B cell (primary cell): ENCODE measurements at regions of chr3 and their contacts with region 1.

Region 1: GRCh38 chr3:102229062-102229655 is 205.7 kb upstream of the ZPLD1 start:
- DNase-seq: peak; percentile 87
- ATAC-seq: peak; percentile 53
- H3K4me3 ChIP-seq: no peak overlapping the region
- H3K4me3 Mint-ChIP-seq: no peak overlapping the region
- H3K27ac ChIP-seq: no peak overlapping the region
- H3K27ac Mint-ChIP-seq: no peak overlapping the region
- H3K4me1 ChIP-seq: peaks cover 22 to 28% of the 10 kb centered on the region in 2 donors
- H3K4me1 Mint-ChIP-seq: peaks cover 36% of the 10 kb centered on the region
- H3K27me3 ChIP-seq: no peaks in the 10 kb centered on the region
- H3K27me3 Mint-ChIP-seq: peaks cover 3% of the 10 kb centered on the region
- CTCF ChIP-seq: peak; percentile 90

Region 2: DNA sequence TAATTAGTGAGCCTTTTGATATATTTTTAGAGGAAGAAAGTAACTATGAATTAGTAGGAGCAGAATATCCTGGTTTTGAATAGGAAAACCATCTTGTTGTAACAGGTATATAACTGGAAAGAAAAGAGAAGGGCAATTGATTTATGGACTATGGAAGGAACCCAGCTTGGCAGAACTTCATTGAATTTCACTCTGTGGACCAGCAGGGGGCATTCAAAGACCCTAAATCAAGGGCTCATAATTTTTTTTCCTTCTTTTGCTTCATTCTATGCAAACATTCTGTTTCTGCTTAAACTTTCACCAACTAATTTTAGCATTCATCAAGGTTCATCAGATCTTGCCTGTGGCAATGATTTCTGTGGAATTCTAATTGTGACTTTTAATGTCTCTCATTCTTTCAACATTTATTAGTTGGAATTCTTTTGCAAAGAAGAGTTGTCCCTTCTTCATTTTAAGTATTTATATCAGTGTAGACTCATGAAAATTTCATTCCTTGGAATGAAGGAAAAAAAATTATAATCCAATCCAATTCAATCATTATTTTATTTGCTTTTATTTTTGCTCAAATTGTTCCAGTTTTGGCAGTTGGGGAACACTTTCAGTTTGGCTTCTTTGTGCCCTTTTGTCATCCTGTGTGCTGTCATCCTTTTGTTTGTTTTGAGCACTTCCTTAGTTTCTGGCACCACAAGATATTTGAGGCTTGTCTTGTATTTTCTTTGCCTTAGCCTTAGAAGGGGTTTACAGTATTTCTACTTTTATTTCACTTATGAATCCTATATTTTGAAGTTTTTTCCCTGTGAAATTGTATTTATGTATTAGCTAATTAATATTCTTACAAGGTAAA is 419.8 kb before region 1 on chr3:
- CTCF ChIA-PET with region 1: interaction called, 1,306 read pairs
- POLR2A ChIA-PET with region 1: interaction called, 5 read pairs
- intact Hi-C with region 1: loop called (anchors 1 kb)
- DNase-seq: peak; percentile 71
- ATAC-seq: peak; percentile 64
- H3K4me3 ChIP-seq: no peak overlapping the region
- H3K4me3 Mint-ChIP-seq: no peak overlapping the region
- H3K27ac ChIP-seq: no peak overlapping the region
- H3K27ac Mint-ChIP-seq: no peak overlapping the region
- H3K4me1 ChIP-seq: peaks cover 5 to 13% of the 10 kb centered on the region in 2 donors
- H3K4me1 Mint-ChIP-seq: peaks cover 20% of the 10 kb centered on the region
- H3K27me3 ChIP-seq: no peaks in the 10 kb centered on the region
- H3K27me3 Mint-ChIP-seq: no peaks in the 10 kb centered on the region
- CTCF ChIP-seq: peak; percentile 88

Region 3: DNA sequence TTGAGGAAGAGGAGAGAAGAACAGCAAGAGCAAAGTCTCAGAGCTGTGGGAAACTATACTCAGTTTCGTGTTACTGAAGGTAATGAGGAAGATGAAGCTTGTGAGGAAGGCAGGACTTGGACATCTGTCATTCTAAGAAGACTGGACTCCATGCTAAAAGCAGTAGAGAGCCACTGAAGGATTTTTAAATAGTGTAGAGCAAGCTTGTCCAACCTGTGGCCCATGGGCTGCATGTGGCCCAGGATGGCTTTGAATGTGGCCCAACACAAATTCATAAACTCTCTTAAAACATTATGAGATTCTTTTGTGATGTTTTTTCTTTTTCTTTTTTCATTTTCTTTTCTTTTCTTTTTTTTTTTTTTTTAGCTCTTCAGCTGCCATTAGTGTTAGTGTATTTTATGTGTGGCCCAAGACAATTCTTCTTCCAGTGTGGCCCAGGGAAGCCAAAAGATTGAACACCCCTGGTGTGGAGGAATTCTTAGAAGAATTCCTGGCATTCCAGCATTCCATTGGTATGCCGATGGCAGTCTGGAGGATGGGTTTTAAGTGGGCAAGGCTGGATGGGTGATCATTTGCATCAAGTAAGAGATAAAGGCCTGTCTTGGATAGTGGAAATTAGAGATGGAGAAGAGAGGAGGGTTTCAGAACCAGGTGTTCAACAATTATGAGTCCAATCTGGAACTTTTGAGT is 386.8 kb before region 1 on chr3:
- CTCF ChIA-PET with region 1: interaction called, 57 read pairs
- POLR2A ChIA-PET with region 1: no interaction called
- intact Hi-C with region 1: no loop called
- DNase-seq: no peak
- ATAC-seq: no peak
- H3K4me3 ChIP-seq: no peak overlapping the region
- H3K4me3 Mint-ChIP-seq: peak overlapping the region; percentile 8
- H3K27ac ChIP-seq: no peak overlapping the region
- H3K27ac Mint-ChIP-seq: peak overlapping the region; percentile 70
- H3K4me1 ChIP-seq: peaks cover 24 to 35% of the 10 kb centered on the region in 2 donors
- H3K4me1 Mint-ChIP-seq: peaks cover 54% of the 10 kb centered on the region
- H3K27me3 ChIP-seq: no peaks in the 10 kb centered on the region
- H3K27me3 Mint-ChIP-seq: no peaks in the 10 kb centered on the region
- CTCF ChIP-seq: no peak

Region 4: DNA sequence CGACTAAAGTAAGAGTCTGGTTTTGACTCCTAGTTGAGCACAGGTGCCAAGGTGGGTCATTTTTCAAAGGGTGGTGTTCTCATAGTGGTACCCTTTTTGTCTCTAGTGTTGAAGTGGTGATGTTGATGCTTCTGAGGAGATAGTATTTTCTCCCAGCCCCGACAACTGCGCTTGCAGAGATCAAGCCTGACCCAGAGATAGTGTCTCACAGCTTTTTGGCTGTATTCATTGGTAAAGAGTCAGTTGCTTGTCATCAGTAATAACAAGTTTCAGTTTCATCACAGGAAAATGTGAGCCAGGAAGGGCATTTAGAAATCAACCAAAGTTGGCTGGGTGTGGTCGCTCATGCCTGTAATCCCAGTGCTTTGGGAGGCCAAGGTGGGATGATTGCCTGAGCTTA is 240.6 kb before region 1 on chr3:
- CTCF ChIA-PET with region 1: interaction called, 10 read pairs
- POLR2A ChIA-PET with region 1: no interaction called
- intact Hi-C with region 1: no loop called
- DNase-seq: no peak
- ATAC-seq: peak; percentile 14
- H3K4me3 ChIP-seq: no peak overlapping the region
- H3K4me3 Mint-ChIP-seq: peak overlapping the region; percentile 12
- H3K27ac ChIP-seq: no peak overlapping the region
- H3K27ac Mint-ChIP-seq: peak overlapping the region; percentile 12
- H3K4me1 ChIP-seq: peaks cover 16 to 18% of the 10 kb centered on the region in 2 donors
- H3K4me1 Mint-ChIP-seq: peaks cover 23% of the 10 kb centered on the region
- H3K27me3 ChIP-seq: no peaks in the 10 kb centered on the region
- H3K27me3 Mint-ChIP-seq: no peaks in the 10 kb centered on the region
- CTCF ChIP-seq: no peak

Region 5: DNA sequence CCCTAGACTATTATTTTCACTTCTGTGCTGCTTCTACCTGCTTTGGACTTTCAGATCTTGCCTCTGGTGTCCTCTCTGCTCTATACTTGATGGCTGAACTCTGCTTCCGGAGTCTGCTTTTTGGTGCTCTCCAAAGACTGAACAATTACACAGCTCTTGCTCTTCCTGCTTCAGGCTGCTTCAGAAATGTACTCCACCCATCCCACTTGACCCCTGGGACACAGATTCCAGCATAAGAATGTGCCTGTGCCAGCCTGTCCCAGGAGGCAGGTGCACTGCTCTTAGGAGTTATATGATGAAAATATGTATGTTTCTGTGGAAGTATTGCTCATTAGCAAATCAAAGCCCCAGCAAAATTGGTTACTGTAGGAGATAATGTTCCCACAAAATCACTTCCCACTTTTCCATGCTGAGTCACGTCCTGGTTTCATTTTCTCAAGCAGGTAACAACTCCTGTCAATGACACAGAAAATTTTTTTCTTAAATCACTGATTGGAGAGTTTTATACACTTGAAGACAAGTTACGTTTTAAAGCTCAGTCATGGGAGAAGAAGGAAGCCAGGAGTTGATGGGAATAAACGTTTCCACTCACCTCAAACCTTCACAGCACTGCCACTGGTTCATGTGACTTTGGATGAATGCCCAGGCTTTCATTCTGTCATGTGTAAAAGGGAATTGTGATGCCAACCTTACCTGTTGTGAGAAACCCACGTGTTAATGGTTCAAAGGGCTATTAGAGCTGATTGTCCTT is 33.8 kb before region 1 on chr3:
- CTCF ChIA-PET with region 1: interaction called, 16 read pairs
- POLR2A ChIA-PET with region 1: no interaction called
- intact Hi-C with region 1: no loop called
- DNase-seq: no peak
- ATAC-seq: no peak
- H3K4me3 ChIP-seq: no peak overlapping the region
- H3K4me3 Mint-ChIP-seq: no peak overlapping the region
- H3K27ac ChIP-seq: no peak overlapping the region
- H3K27ac Mint-ChIP-seq: no peak overlapping the region
- H3K4me1 ChIP-seq: no peaks in the 10 kb centered on the region
- H3K4me1 Mint-ChIP-seq: no peaks in the 10 kb centered on the region
- H3K27me3 ChIP-seq: no peaks in the 10 kb centered on the region
- H3K27me3 Mint-ChIP-seq: no peaks in the 10 kb centered on the region
- CTCF ChIP-seq: no peak

Region 6: DNA sequence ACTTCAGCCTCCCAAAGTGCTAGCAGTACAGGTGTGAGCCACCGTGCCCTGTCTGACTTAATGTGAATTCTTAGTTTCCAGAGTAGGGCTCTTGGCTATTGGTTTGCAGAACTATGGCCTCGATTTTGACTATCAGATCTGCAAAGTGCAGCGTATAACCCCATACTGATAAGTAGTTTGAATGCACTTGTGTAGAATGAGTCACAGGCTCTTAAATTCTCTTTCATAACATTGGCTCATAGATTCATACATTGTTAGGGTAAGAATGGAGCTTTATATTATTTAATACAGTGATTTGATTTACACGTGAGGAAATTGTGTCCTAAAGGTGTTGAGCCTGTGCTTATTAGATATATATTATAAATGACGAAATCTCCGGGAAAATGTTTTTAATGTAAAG is 315.6 kb after region 1 on chr3:
- CTCF ChIA-PET with region 1: interaction called, 253 read pairs
- POLR2A ChIA-PET with region 1: no interaction called
- intact Hi-C with region 1: no loop called
- DNase-seq: no peak
- ATAC-seq: no peak
- H3K4me3 ChIP-seq: no peak overlapping the region
- H3K4me3 Mint-ChIP-seq: no peak overlapping the region
- H3K27ac ChIP-seq: no peak overlapping the region
- H3K27ac Mint-ChIP-seq: no peak overlapping the region
- H3K4me1 ChIP-seq: no peaks in the 10 kb centered on the region
- H3K4me1 Mint-ChIP-seq: no peaks in the 10 kb centered on the region
- H3K27me3 ChIP-seq: peaks cover 0 to 13% (median 2%) of the 10 kb centered on the region in 4 experiments
- H3K27me3 Mint-ChIP-seq: peaks cover 11% of the 10 kb centered on the region
- CTCF ChIP-seq: no peak